Activated CD8-positive, alpha-beta memory T cell treated with anti-CD3 and anti-CD28 coated beads, Interleukin-2, amount 10 ng/mL, durations not matched to agents 7 days and 5 days (primary cell): ENCODE measurements at regions of chr1 and their contacts with region 1.

Region 1: GRCh38 chr1:203340112-203340804 is 10.7 kb downstream of the FMOD start:
- DNase-seq: peak; percentile 75
- ATAC-seq: peak; percentile 84
- H3K4me3 Mint-ChIP-seq: no peak overlapping the region
- H3K27ac Mint-ChIP-seq: no peak overlapping the region
- H3K4me1 Mint-ChIP-seq: peaks cover 15% of the 10 kb centered on the region
- H3K27me3 Mint-ChIP-seq: peaks cover 47% of the 10 kb centered on the region

Region 2: DNA sequence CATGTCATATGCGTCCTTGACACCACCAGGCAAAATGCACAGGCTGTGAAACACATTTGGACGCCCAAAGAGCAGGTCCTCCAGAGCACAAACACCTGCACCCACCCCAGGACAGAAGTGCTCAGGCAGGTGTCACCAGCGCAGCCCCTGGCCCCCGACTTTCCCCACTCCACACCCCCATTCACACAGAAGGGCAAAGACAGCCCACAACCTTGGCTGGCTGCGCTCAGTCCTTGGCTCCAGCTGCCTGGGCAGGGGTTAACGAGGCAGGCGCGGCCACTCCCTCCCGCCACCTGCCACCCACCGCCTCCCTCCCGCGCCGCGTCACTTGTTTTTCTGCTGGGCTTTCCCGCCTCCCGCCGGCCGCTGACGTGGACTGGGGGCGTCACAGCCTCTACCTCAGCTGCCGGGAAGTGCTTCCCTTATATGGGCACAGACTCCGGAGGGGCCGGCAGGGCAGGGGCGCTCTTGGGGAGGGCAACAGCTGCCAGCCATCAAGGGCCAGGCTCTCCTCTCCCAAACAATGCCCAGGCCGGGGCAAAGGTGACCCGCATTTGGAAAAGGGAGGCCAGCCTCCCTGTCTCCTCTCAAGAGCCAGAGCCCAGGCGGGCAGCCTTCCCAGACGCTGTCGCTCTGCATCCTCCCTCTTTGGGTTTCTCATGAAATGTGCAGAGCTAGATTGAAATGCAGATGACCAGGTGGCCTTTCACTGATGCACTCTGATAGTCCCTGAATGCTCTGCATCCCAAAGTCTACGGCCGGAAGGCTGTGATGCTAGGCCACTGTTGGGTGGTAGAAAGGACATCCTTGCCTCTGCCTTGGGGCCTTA is 49.8 kb before region 1 on chr1:
- CTCF ChIA-PET with region 1: interaction called, 12 read pairs
- DNase-seq: peak; percentile 97
- ATAC-seq: peak; percentile 62
- H3K4me3 Mint-ChIP-seq: peak overlapping the region; percentile 75
- H3K27ac Mint-ChIP-seq: peak overlapping the region; percentile 99
- H3K4me1 Mint-ChIP-seq: peaks cover 68% of the 10 kb centered on the region
- H3K27me3 Mint-ChIP-seq: no peaks in the 10 kb centered on the region

Region 3: DNA sequence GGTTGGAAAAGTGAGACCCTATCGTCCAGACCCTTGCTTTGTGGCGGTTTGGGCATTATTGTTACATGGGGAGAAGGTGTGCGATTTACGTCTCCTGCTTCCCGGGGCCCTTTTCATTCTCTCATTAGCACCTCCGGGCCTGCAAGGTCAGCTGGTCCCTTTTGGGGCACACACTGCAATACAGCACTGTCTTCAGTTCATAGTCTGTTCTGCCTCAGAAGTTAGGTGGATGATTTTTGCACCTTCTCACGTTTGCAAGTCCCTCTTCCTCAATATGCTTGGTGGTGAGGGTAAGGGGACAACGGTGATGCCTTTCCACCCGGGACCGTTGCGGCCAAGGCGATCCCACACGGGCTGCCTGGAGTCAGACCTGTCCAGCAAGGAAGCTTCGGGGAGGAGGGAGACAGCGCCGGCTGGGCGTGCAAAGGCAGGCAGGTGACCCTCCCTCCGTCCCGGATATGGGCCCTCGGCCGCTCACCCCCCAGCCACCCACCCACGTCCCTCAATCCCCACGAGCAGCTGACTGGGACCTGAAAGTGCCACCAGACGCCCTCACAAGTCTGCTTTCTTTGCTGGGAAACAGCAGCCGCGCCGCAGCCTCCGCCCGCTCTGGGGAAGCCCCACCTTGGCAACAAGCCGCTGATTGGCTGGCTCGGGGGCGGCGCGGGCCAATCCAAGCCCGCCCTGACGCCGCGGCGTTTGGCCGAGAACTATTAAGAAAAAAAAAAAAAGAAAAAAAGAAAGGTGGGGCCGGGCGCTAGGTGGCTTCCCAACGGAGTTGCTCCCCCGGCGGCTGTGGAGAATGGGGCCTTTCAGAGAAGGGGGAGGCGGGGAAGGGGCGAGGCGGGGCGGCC is 13.2 kb before region 1 on chr1:
- CTCF ChIA-PET with region 1: interaction called, 148 read pairs
- DNase-seq: peak; percentile 96
- ATAC-seq: peak; percentile 91
- H3K4me3 Mint-ChIP-seq: peak overlapping the region; percentile 71
- H3K27ac Mint-ChIP-seq: peak overlapping the region; percentile 91
- H3K4me1 Mint-ChIP-seq: peaks cover 66% of the 10 kb centered on the region
- H3K27me3 Mint-ChIP-seq: no peaks in the 10 kb centered on the region

Region 4: GRCh38 chr1:203475012-203475981 is 135.0 kb after region 1 on chr1 and contains the start of gene PRELP:
- CTCF ChIA-PET with region 1: interaction called, 10 read pairs
- DNase-seq: no peak
- ATAC-seq: no peak
- H3K4me3 Mint-ChIP-seq: no peak within 1 kb of the TSS
- H3K27ac Mint-ChIP-seq: no peak within 1 kb of the TSS
- H3K4me1 Mint-ChIP-seq: peaks cover 7% of the 10 kb centered on the region
- H3K27me3 Mint-ChIP-seq: peaks cover 54% of the 10 kb centered on the region
- total RNA-seq, gene PRELP: not detected